ENCODE measurements at regions of chr1 and their contacts with region 1.

Region 1: GRCh38 chr1:37434292-37434907 is 40.0 kb upstream of the ZC3H12A start:
- DNase-seq: peak; percentile 21
- ATAC-seq: peak; percentile 98
- H3K4me3 ChIP-seq: no peak overlapping the region
- H3K27ac ChIP-seq: no peak overlapping the region
- H3K4me1 ChIP-seq: no peaks in the 10 kb centered on the region
- H3K27me3 ChIP-seq: peaks cover 22% of the 10 kb centered on the region; the same call in 1 of the 2 replicates
- CTCF ChIP-seq: peak; percentile 81
- POLR2A ChIP-seq: no peak
- RAD21 ChIP-seq: peak; percentile 76

Region 2: GRCh38 chr1:36516372-36517325 is 917.8 kb before region 1 on chr1:
- CTCF ChIA-PET with region 1: interaction called, 3 read pairs
- POLR2A ChIA-PET with region 1: no interaction called
- dilution Hi-C with region 1: no loop called
- in situ Hi-C with region 1: no loop called
- intact Hi-C with region 1: loop called (anchors 1 kb)
- DNase-seq: peak; percentile 43
- ATAC-seq: peak; percentile 85
- H3K4me3 ChIP-seq: no peak overlapping the region
- H3K27ac ChIP-seq: no peak overlapping the region
- H3K4me1 ChIP-seq: no peaks in the 10 kb centered on the region
- H3K27me3 ChIP-seq: no peaks in the 10 kb centered on the region; the same call in 1 of the 2 replicates
- CTCF ChIP-seq: peak; percentile 71
- POLR2A ChIP-seq: no peak
- RAD21 ChIP-seq: peak; percentile 75

Region 3: DNA sequence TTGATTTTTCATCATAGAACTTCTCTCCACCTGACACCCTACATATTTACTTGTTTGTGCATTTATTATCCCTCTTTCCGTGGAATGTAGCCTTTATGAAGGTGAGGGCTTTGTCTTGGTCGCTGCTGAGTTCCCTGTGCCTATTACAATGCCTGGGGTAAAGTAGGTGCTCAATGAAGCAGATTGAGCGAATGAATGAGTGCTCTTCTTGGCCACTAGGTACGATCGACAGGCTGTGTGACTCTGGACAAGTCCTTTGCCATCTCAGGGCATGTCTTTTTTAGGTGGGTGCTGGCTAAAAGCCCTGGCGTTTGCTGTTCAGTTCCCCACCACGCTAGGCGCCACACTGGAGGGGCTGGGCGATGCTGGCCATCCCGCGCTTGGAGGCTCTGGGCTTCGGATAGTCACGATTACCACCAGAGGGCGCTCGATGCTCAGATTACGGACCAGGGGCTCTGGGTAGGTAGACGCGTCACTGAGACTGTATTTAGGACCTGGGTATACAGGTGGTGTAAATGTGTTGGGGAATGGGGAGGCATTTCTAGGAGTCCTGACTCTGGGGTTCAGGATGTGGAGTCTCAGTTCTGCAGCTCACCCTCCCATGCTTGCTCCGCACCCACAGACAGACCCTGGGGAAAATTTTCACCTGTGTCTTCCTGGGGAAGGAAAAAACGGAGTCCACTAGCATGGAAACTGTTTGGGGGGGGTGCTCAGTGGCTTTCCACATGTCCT is 880.6 kb before region 1 on chr1:
- CTCF ChIA-PET with region 1: no interaction called
- POLR2A ChIA-PET with region 1: no interaction called
- dilution Hi-C with region 1: no loop called
- in situ Hi-C with region 1: no loop called
- intact Hi-C with region 1: loop called (anchors 1 kb)
- DNase-seq: peak; percentile 25
- ATAC-seq: peak; percentile 88
- H3K4me3 ChIP-seq: no peak overlapping the region
- H3K27ac ChIP-seq: no peak overlapping the region
- H3K4me1 ChIP-seq: no peaks in the 10 kb centered on the region
- H3K27me3 ChIP-seq: peaks cover 12% of the 10 kb centered on the region
- CTCF ChIP-seq: peak; percentile 61
- POLR2A ChIP-seq: no peak
- RAD21 ChIP-seq: peak; percentile 64

Region 4: DNA sequence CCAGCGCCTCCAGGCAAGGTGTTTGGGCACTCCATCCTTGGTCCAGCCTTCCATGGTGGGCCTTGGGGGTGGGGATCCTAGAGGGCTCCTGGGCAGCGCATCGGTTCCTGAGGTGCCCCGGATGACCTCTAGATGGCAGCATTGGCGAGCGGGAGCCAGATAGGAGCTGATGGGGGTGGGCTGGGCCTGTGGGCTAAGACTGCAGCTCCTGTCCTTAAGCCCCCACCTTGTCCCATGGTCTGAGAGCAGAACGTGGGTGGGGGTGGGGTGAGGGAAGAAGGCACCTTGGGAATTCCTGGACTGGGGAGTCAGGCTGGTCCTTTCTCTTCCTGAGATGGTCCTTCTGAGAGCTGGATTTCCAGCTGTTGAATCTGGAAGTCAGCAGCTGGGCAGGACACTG is 858.3 kb before region 1 on chr1:
- CTCF ChIA-PET with region 1: interaction called, 4 read pairs
- POLR2A ChIA-PET with region 1: no interaction called
- dilution Hi-C with region 1: no loop called
- in situ Hi-C with region 1: loop called (anchors 10 kb)
- intact Hi-C with region 1: loop called (anchors 1 kb)
- DNase-seq: peak; percentile 19
- ATAC-seq: peak; percentile 97
- H3K4me3 ChIP-seq: no peak overlapping the region
- H3K27ac ChIP-seq: no peak overlapping the region
- H3K4me1 ChIP-seq: no peaks in the 10 kb centered on the region
- H3K27me3 ChIP-seq: peaks cover 6% of the 10 kb centered on the region
- CTCF ChIP-seq: peak; percentile 78
- POLR2A ChIP-seq: no peak
- RAD21 ChIP-seq: peak; percentile 82

Region 5: DNA sequence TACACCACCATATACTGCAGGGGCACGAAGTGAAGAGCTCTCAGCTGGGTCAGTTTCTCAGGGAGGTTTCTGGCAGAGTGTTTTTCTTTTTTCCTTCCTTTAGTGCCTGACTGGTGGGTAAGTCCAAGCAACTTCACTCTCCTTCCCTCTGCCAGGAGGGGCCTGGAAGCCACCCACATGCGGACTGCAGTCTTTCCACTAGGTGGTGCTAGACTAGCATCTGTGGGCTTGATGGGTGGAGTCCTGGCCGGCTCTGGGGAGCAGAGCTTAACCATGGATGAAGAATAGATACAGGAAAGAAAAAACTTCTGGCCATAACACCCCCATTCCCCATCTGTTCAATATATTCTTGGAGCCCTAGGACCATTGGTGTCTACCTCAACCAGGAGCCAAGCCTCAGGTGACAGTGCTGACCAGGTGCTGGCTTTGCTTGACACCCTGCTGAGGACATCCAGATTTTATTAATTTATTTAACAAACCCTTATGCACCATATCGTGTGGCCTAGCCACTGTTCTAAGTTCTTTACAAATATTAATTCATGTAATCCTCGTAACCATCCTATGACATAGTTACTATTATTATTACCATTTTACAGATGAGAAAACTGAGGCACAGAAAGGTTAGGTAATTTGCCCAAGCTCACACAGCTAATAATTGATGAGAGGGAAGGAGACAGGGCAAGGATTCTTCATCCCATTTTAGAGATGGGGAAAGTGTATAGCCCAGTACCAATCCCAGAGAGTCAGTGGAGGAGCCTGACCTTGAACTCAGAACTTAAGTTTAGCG is 825.0 kb before region 1 on chr1:
- CTCF ChIA-PET with region 1: no interaction called
- POLR2A ChIA-PET with region 1: no interaction called
- dilution Hi-C with region 1: no loop called
- in situ Hi-C with region 1: no loop called
- intact Hi-C with region 1: loop called (anchors 1 kb)
- DNase-seq: peak; percentile 29
- ATAC-seq: peak; percentile 86
- H3K4me3 ChIP-seq: no peak overlapping the region
- H3K27ac ChIP-seq: no peak overlapping the region
- H3K4me1 ChIP-seq: no peaks in the 10 kb centered on the region
- H3K27me3 ChIP-seq: no peaks in the 10 kb centered on the region; the same call in 1 of the 2 replicates
- CTCF ChIP-seq: peak; percentile 52
- POLR2A ChIP-seq: no peak
- RAD21 ChIP-seq: peak; percentile 53

Region 6: DNA sequence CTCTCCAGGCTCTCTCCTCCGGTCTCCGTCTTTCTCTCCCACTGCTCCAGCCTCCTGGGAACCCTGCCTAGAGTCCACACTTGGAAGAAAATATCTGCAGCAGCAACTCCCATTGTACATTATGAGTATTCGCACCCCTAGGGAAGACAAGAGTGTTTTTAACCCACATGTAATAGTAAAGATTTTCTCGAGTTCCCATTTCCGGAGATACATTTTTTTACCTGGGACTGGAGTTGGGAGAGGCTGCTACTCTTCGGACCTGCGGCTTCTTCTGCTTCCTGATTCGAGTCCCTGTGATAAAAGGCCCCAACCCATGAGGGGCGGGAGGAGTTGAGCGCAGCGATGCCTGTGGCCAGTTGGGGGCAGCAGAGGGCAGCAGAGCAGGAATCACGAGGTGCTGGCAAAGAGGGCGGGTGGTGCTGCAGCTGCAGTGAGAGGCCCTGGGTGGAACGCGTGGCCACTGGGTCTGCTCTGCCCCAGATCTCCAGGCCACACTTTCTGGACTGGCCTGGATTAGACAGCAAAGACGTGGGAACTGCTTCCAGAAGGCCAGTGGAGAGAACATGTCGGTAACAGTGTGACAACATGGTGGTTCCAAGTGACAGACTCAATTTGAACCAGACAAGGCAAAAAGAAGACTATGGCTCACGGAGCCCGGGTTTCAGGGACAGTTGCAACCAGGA is 730.7 kb before region 1 on chr1:
- CTCF ChIA-PET with region 1: no interaction called
- POLR2A ChIA-PET with region 1: no interaction called
- dilution Hi-C with region 1: no loop called
- in situ Hi-C with region 1: no loop called
- intact Hi-C with region 1: loop called (anchors 1 kb)
- DNase-seq: peak; percentile 49
- ATAC-seq: peak; percentile 99
- H3K4me3 ChIP-seq: no peak overlapping the region
- H3K27ac ChIP-seq: no peak overlapping the region
- H3K4me1 ChIP-seq: no peaks in the 10 kb centered on the region
- H3K27me3 ChIP-seq: no peaks in the 10 kb centered on the region
- CTCF ChIP-seq: peak; percentile 76
- POLR2A ChIP-seq: no peak
- RAD21 ChIP-seq: peak; percentile 78

Measured in IMR-90 (cell line).